ENCODE measurements at regions of chr2 and their contacts with region 1.

Region 1: DNA sequence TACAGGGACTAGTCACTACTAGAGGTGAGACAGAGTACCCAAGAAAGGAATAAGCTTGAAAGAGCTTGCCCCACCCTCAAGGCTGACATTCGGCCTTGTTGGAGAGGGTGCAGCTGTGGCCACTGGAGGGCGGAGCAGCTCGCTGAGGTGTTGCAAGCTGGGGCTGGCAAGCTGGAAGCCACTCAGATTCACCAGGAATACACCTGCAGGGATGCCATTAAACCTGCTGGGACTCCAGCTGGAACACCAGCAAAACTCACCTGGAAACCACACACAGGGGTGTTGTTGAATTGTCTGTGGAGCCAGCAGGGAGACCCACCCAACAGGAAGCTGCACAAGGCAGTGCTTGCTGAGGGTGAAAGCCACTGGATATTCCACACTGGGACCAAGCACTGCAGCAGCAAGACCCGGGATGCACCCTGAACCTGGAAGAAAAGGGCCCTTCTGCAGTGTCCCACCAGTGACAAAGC is 26.1 kb downstream of the KCTD18 start:
- DNase-seq: peak; percentile 41
- H3K4me3 Mint-ChIP-seq: no peak overlapping the region
- H3K27ac Mint-ChIP-seq: no peak overlapping the region
- H3K4me1 Mint-ChIP-seq: peaks cover 35% of the 10 kb centered on the region
- H3K27me3 Mint-ChIP-seq: no peaks in the 10 kb centered on the region

Region 2: GRCh38 chr2:199979832-199980628 is 503.7 kb before region 1 on chr2:
- CTCF ChIA-PET with region 1: interaction called, 23 read pairs
- POLR2A ChIA-PET with region 1: no interaction called
- DNase-seq: peak; percentile 84
- H3K4me3 Mint-ChIP-seq: no peak overlapping the region
- H3K27ac Mint-ChIP-seq: no peak overlapping the region
- H3K4me1 Mint-ChIP-seq: peaks cover 21% of the 10 kb centered on the region
- H3K27me3 Mint-ChIP-seq: no peaks in the 10 kb centered on the region

Region 3: DNA sequence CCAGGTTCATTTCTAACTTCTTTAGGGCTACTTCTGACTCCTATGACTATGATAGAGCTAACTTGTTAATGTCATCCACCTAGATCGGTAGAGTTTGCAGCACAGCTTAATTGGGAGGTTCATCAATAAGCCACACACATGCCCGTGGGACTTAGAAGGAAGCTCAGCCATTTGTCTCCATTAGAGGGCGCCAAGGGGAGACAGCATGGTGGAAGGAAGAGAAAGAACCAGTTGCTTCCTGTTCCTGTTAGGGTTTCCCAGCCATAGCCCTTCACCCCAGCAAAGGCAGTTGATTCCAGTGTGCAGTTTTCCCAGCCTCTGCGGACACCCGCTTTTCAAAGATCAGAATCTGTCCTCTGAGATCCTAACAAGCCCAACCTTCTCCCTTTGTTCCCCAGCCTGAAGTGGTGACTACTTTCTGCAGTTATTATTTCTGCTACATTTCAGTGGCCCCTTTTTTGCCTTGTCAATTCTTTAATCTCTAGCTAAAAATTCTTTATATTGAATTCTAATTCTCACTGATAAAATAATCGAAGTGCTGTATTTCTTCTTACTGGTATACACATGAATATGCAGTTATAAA is 498.0 kb before region 1 on chr2:
- CTCF ChIA-PET with region 1: interaction called, 23 read pairs
- POLR2A ChIA-PET with region 1: interaction called, 4 read pairs
- DNase-seq: peak; percentile 68
- H3K4me3 Mint-ChIP-seq: no peak overlapping the region
- H3K27ac Mint-ChIP-seq: no peak overlapping the region
- H3K4me1 Mint-ChIP-seq: peaks cover 7% of the 10 kb centered on the region
- H3K27me3 Mint-ChIP-seq: no peaks in the 10 kb centered on the region

Region 4: DNA sequence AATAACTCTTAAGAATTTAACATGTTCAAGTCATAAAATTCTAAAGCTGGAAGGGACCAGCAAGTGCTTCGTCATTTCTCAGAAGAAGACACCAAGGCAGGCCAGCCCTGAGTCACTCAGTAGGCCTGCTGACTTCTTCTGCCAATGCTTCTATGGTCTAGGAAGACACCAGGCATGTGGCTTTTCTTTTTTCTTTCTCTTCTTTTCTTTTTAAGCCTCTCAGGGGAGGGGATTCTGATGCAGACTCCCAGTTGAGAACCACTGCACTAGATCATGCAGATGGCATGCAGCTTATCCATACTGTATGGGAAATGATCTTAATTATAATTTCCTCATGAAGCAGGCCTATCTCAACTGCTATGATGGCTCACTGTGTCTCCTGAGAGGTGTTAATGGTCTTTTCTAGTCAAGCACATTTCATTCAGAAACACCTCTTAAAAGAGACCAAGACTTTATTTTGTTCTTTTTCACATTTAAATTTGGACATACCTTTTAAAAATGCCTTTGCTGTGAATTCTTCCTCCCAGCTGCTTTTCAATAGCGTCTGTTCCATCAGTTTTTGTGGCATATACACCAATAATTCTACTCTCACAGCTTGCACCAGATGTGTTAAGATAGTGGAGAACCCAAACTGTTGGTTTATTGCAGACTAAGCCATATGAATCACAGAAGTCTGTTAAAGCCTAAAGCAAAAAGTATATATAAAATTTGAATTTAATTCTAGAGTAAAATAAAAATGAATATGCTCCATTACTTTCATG is 14.8 kb after region 1 on chr2:
- CTCF ChIA-PET with region 1: interaction called, 22 read pairs
- POLR2A ChIA-PET with region 1: interaction called, 4 read pairs
- DNase-seq: no peak
- H3K4me3 Mint-ChIP-seq: no peak overlapping the region
- H3K27ac Mint-ChIP-seq: no peak overlapping the region
- H3K4me1 Mint-ChIP-seq: no peaks in the 10 kb centered on the region
- H3K27me3 Mint-ChIP-seq: no peaks in the 10 kb centered on the region

Region 5: GRCh38 chr2:200888704-200889625 is 405.2 kb after region 1 on chr2 and contains the starts of genes NIF3L1 and PPIL3:
- CTCF ChIA-PET with region 1: no interaction called
- POLR2A ChIA-PET with region 1: no interaction called
- DNase-seq: peak; percentile 98
- H3K4me3 Mint-ChIP-seq: peak within 1 kb of the TSS; percentile 89
- H3K27ac Mint-ChIP-seq: peak within 1 kb of the TSS; percentile 99
- H3K4me1 Mint-ChIP-seq: peaks cover 58% of the 10 kb centered on the region
- H3K27me3 Mint-ChIP-seq: no peaks in the 10 kb centered on the region
- total RNA-seq, gene NIF3L1: 28.9 to 30.1 TPM
- total RNA-seq, gene PPIL3: 101 to 102 TPM